Posterior vena cava (tissue), 2 donors: ENCODE measurements at regions of chr7 and their contacts with region 1.

Region 1: GRCh38 chr7:158829342-158830210 is at the start of gene ESYT2:
- DNase-seq: peak; percentile 99
- total RNA-seq, gene ESYT2: 145 to 181 TPM

Region 2: GRCh38 chr7:158782761-158783401 is 46.7 kb before region 1 on chr7:
- intact Hi-C with region 1: loop called in 1 of 2 experiments (anchors 5 kb)
- DNase-seq: peak; percentile 89

Region 3: DNA sequence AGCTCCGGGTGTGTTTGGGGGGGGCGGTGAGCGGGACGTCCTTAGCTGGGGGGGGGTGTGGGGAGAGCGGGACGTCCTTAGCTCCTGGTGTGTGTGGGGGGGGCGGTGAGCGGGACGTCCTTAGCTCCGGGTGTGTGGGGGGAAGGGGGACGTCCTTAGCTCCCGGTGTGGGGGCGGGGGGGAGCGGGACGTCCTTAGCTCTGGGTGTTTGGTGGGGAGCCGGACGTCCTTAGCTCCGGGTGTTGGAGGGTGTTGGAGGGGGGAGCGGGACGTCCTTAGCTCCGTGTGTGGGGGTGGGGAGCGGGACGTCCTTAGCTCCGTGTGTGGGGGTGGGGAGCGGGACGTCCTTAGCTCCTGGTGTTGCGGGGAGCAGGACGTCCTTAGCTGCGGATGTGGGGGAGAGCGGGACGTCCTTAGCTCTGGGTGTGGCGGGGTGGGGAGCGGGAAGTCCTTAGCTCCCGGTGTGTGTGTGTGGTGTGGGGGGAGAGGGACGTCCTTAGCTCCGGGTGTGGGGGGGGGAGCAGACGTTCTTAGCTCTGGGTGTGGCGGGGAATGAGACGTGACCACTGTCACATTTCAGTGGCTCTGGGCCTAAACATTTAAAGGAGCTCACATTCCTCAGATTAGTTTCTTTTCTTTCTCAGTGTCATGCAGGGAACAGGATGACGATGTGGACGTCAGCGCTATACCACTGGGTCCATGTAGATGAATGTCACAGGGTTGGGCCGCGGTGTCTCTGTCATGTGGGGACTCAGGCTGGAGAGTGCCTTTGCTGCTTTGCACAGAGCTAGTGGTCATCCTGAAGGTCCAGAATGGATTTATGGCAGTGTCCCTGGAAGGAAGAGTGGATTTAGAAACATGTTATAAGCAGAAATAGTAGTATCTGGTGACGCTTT is 34.3 kb after region 1 on chr7:
- intact Hi-C with region 1: loop called in 1 of 2 experiments (anchors 5 kb)
- DNase-seq: peak; percentile 95

Region 4: DNA sequence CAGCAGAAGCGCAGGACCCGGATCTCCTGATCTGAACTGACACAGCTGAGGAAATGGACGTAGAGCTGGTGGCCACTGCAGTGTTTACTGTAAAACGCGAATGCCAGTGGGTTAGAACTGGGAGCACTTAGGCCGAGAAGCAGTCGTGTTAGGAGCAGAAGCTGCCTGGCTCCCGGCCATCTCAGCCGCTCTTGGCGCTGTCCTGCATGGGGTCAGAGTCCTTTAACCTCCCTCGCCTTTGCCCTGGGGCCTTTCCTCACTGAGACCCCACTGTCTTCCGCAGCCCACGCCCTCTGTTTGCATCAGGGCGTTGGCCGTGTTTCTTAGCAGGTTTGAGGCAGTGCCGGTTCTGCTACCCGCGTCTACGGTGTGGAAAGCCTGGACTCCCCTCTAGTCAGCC is 51.4 kb after region 1 on chr7:
- intact Hi-C with region 1: no loop called
- DNase-seq: no peak

Region 5: DNA sequence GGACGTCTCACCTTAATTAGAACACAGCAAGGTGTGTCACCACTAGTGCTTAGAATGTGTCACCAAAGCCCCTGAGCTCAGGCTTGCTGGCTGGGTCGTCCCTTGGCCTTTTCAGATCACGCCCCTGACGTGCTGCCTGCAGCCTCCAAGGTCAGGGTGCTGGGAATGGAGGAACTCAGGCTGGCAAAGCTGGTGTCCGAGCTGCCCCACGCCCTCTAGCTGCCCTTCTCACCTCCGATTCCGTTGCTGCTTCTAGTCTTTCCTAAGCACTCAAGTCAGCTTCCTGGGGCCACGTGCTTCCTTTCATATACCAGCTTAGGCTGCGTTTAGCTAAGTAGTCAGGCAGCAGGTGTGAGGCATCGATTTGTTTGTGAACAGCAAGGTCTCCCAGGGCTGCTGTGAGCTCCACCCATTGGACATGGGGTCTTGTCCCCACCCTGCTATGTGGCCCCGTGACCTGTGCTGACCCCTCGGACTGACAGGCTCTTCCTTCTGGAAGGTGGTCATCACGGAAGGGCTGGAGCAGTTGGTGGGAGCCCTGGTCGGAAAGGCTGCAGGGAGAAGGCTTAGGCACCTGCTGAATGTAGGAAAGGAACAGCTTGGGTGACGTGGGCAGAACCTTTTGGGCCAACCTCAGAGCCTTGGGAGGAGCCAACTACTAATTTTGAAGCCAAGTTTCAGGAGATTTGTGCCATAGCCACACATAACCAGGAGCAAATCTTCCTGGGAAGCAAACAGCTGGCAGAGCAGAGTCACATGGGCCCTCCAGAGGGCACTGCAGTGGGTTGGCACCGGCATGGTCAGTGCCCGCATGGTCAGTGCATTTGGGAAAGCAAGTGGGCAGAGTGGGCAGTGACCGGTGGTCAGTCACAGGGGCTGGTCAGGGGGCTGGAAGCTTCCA is 286.3 kb after region 1 on chr7:
- intact Hi-C with region 1: no loop called
- DNase-seq: peak; percentile 67